GM10248 (cell line): ENCODE measurements at regions of chr5 and their contacts with region 1.

Region 1: DNA sequence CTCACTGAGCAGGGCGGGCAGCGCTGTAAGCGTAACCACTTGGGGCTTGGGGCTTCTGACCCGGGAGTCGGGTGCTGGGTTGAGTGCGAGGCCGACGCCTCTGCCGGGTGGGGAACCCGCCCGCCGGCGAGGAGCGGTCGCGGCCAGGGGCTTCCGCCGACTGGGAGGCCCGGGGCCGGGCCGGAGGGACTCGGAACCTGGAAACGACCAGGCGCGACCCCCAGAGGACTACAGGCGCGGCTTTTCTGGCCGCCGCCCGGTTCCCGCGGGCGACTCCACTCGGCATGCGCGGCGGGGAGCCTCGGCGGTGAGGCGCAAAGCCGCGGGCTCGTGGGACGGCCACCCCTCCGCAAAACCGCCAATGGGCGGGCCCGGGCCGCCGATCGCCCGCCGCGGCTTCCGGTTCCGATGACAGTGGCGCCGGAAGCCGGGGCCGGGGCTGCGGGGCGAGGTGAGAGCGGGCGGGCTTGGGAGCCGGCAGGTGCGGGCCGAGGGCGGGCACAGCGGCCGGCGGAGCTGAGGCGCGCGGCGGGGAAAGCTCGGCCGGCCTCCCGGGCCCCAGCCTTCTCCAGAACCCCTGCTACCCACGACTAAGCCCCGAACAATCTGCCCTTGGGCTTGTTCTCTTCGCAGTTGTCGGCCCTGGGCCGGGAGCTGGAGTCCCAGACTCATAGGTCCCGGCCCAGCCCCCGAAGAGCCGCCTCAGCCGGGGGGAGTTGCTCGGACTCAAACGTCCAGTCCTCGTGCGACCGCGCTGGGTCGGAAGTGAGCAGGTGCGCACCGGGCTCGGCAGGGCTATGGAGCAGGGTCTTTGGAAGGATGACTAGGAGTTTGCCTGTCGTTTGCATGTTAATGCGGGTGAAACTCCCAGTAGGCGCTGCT is at the start of gene RMND5B:
- DNase-seq: peak; percentile 92
- CTCF ChIP-seq: no peak

Region 2: DNA sequence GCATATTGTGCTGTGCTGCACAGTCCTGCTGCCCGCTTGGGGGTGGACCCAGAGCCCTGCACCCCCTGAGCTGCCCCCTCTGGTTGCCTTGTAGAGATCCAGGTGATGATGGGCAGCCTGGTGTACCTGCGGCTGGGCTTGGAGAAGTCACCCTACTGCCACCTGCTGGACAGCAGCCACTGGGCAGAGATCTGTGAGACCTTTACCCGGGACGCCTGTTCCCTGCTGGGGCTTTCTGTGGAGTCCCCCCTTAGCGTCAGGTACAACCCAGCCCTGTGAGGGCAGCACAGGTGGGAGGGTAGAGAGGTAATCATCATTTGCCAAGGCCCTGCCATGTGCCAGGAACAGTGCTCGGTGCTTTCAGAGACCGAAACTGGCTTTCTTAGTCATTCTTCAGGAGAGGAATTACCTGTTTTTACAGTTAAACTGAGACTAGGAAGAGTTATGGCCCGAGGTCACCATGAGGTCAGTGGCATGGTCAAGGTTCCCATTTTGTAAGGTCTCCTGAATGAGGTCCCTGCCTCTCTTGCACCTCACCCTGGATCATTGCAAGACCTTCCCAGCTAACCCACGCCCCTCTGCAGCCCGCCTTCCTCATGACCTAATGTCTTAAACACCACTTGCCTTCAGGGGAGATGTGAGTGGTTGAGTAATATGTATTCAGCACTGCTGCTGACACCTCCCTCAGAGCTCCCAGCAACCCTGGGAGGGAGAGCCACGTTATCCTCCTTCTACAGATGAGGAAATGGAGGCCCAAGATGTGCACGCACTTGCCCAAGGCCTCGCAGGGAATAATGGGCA is 15.4 kb after region 1 on chr5:
- CTCF ChIA-PET with region 1: interaction called, 48 read pairs
- POLR2A ChIA-PET with region 1: no interaction called
- DNase-seq: peak; percentile 82
- CTCF ChIP-seq: peak; percentile 91